ENCODE measurements at regions of chr17 and their contacts with region 1.

Region 1: DNA sequence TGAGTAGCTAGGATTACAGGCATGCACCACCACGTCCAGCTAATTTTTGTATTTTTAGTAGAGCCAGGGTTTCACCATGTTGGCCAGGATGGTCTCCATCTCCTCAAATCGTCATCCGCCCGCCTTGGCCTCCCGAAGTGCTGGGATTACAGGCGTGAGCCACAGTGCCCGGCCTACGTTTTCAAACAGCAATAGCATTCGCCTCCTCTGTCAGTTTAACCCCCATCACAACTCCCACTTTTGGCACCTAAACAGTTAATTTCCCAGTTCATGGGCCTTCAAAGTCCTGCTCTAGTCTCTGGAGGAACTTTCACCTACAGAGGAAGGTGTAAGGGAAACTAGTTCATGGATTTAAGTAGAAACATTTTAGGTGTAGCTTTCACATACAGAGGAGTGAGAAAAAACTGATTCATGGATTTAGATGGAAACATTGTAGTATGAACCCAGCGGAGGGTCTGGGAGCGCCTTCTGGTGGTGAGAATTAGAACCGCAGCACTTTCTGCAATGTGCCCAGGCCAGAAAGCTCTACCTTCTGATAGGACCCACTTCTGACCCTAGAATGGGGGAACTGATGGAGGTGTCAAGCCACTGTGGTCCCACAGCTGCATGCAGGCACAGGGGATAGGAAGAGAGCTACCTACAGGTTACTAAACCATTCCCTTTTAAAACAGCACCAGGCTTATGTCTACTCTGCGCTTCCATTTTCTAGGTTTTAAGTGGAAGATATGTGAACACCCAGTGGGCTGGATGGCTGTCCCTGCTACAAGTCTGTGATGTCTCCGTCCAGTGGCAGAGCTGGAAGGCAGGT is 12.0 kb upstream of the MEOX1 start:
- DNase-seq: peak; percentile 87
- H3K4me3 Mint-ChIP-seq: no peak overlapping the region
- H3K27ac Mint-ChIP-seq: no peak overlapping the region
- H3K4me1 Mint-ChIP-seq: peaks cover 19% of the 10 kb centered on the region
- H3K27me3 Mint-ChIP-seq: no peaks in the 10 kb centered on the region

Region 2: GRCh38 chr17:43393944-43394482 is 279.7 kb before region 1 on chr17:
- CTCF ChIA-PET with region 1: interaction called, 4 read pairs
- intact Hi-C with region 1: loop called (anchors 1 kb)
- DNase-seq: peak; percentile 97
- H3K4me3 Mint-ChIP-seq: no peak overlapping the region
- H3K27ac Mint-ChIP-seq: peak overlapping the region; percentile 3
- H3K4me1 Mint-ChIP-seq: peaks cover 20% of the 10 kb centered on the region
- H3K27me3 Mint-ChIP-seq: no peaks in the 10 kb centered on the region

Region 3: GRCh38 chr17:43584666-43585102 is 89.0 kb before region 1 on chr17:
- CTCF ChIA-PET with region 1: interaction called, 18 read pairs
- intact Hi-C with region 1: no loop called
- DNase-seq: no peak
- H3K4me3 Mint-ChIP-seq: no peak overlapping the region
- H3K27ac Mint-ChIP-seq: no peak overlapping the region
- H3K4me1 Mint-ChIP-seq: no peaks in the 10 kb centered on the region
- H3K27me3 Mint-ChIP-seq: no peaks in the 10 kb centered on the region

Region 4: DNA sequence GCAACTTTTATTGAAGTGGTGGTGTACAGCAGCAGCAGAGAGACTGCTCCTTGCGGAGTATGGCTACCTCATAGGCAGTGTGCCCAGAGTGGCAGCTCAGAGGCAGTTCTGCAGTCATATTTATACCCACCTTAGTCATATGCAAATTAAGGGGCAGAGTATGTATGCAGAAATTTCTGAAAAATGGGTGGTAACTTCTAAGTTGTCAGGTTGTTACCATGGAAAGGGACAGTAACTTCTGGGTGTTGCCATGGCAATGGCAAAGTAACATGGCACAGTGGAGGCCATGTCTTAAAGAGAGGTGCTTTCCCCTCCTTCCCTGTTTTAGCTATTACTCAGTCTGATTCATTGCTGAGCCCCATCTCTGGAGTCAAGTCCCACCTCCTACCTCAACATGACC is 65.4 kb before region 1 on chr17:
- CTCF ChIA-PET with region 1: interaction called, 16 read pairs
- intact Hi-C with region 1: no loop called
- DNase-seq: peak; percentile 88
- H3K4me3 Mint-ChIP-seq: no peak overlapping the region
- H3K27ac Mint-ChIP-seq: peak overlapping the region; percentile 70
- H3K4me1 Mint-ChIP-seq: peaks cover 9% of the 10 kb centered on the region
- H3K27me3 Mint-ChIP-seq: peaks cover 7% of the 10 kb centered on the region

Measured in activated naive CD4-positive, alpha-beta T cell treated with anti-CD3 and anti-CD28 coated beads for 36 hours (primary cell).